K562 (cell line): ENCODE measurements at regions of chr20 and their contacts with region 1.

Region 1: GRCh38 chr20:62926239-62927104 is at the start of gene DIDO1:
- DNase-seq: peak; percentile 90 to 97 (median 92)
- ATAC-seq: peak; percentile 87
- H3K4me3 ChIP-seq: peak within 1 kb of the TSS; percentile 70
- H3K27ac ChIP-seq: peak within 1 kb of the TSS; percentile 88
- H3K4me1 ChIP-seq: peaks cover 43 to 44% of the 10 kb centered on the region in 2 experiments; a peak in 4 of 5 replicates
- H3K27me3 ChIP-seq: no peaks in the 10 kb centered on the region
- CTCF ChIP-seq: peak; percentile 50 to 55 (median 54)
- EP300 ChIP-seq: no peak
- POLR2A ChIP-seq: peak; percentile 75
- RAD21 ChIP-seq: no peak
- polyA plus RNA-seq, gene DIDO1: 4.4 to 4.8 TPM

Region 2: GRCh38 chr20:62914970-62915457 is 11.5 kb before region 1 on chr20:
- CTCF ChIA-PET with region 1: no interaction called
- POLR2A ChIA-PET with region 1: interaction called, 45 read pairs
- in situ Hi-C with region 1: no loop called
- intact Hi-C with region 1: no loop called
- DNase-seq: peak in 3 of 4 experiments; percentile 48 to 59 (median 58)
- ATAC-seq: peak; percentile 80
- H3K4me3 ChIP-seq: no peak overlapping the region
- H3K27ac ChIP-seq: peak overlapping the region; percentile 55; the same call in 2 of the 3 replicates
- H3K4me1 ChIP-seq: peaks cover 12 to 26% of the 10 kb centered on the region in 2 experiments; a peak in 4 of 5 replicates
- H3K27me3 ChIP-seq: no peaks in the 10 kb centered on the region
- CTCF ChIP-seq: no peak
- EP300 ChIP-seq: no peak
- POLR2A ChIP-seq: no peak
- RAD21 ChIP-seq: no peak